MCF 10A (cell line): ENCODE measurements at regions of chr7 and their contacts with region 1.

Region 1: DNA sequence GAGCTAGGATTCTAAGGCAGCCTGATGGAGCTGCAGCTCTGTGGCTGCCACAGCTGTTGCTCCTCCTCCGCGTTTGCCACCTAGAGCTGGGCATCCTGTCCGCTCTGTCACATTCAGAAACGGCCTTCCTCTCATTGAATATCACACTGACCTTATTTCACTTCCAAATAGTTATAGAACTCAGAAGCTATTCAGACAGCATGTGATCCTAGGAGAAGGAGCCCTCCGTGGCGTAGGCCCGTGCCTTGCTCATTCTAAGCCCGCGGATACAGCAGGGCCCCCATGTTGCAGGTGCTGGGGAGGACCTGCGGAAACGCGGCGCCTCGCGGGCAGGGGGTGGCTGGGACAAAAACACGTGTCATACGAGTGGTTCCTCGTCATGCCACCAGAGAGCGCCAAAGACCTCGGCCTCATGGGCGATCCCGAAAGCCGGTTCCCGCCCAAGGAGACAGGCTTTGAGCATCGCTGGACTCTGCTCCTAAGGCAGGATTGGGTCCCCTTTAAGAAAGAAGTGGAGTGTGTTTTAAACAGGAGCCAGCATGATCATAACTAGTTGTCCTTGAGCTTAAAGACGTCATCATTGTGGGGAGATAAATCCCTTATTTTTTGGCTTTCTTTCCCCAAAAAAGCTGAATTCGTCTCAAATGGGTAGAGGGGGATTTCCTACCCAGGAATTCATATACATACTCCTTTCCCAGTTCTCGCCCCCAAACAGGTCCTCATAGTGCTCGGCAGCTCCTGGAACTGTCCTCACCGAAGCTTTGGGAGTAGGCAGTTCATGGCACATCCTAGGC is 17.9 kb upstream of the FIGNL1 start:
- DNase-seq: peak; percentile 80
- H3K4me3 Mint-ChIP-seq: no peak overlapping the region
- H3K27ac Mint-ChIP-seq: no peak overlapping the region
- H3K4me1 Mint-ChIP-seq: peaks cover 7% of the 10 kb centered on the region
- H3K27me3 Mint-ChIP-seq: no peaks in the 10 kb centered on the region
- CTCF ChIP-seq: peak; percentile 91

Region 2: GRCh38 chr7:50268223-50268622 is 199.8 kb before region 1 on chr7:
- CTCF ChIA-PET with region 1: no interaction called
- POLR2A ChIA-PET with region 1: no interaction called
- intact Hi-C with region 1: no loop called
- DNase-seq: no peak
- H3K4me3 Mint-ChIP-seq: no peak overlapping the region
- H3K27ac Mint-ChIP-seq: no peak overlapping the region
- H3K4me1 Mint-ChIP-seq: peaks cover 9% of the 10 kb centered on the region
- H3K27me3 Mint-ChIP-seq: peaks cover 50% of the 10 kb centered on the region
- CTCF ChIP-seq: no peak

Region 3: DNA sequence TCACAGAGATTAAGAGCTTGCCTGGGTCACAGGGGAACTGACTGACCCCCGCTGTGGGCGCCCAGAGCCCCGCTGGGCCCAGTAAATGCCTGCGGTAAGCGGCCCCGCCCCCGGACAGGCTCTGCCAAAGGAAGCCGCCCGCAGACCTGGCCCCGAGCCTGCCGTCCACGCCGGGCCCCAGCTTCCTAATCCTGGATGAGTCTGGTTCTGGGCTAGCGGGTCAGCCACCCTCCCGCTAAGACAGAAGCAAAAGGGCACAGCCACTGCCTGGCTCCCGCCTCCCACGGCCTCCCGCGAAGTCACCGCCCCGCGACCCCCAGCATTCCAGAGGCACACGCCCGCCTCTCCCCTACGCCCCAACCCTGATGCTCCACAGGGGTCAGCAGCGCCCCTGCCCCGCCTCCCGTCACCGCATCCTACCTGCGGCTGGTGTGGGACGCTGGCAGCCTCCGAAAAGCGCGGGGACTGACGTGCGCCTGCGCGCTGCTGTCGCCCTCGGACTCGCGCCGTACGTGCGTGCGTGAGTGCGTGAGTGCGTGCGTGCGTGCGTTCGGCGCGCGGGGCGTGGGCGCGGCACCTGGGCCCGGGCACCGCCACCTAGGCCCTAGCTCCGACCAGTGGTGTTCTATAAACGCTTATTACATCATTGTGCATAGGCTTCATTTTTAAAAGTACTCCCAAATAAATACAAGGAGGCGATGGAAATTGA is 18.0 kb before region 1 on chr7 and contains the start of gene FIGNL1:
- CTCF ChIA-PET with region 1: interaction called, 21 read pairs
- POLR2A ChIA-PET with region 1: no interaction called
- intact Hi-C with region 1: no loop called
- DNase-seq: peak; percentile 73
- H3K4me3 Mint-ChIP-seq: peak within 1 kb of the TSS; percentile 92
- H3K27ac Mint-ChIP-seq: peak within 1 kb of the TSS; percentile 59
- H3K4me1 Mint-ChIP-seq: peaks cover 22% of the 10 kb centered on the region
- H3K27me3 Mint-ChIP-seq: no peaks in the 10 kb centered on the region
- CTCF ChIP-seq: no peak
- total RNA-seq, gene FIGNL1: 10.7 and 14.5 TPM in 2 replicates

Region 4: GRCh38 chr7:50502001-50502684 is 34.1 kb after region 1 on chr7:
- CTCF ChIA-PET with region 1: interaction called, 27 read pairs
- POLR2A ChIA-PET with region 1: interaction called, 5 read pairs
- intact Hi-C with region 1: no loop called
- DNase-seq: peak; percentile 95
- H3K4me3 Mint-ChIP-seq: peak overlapping the region; percentile 58
- H3K27ac Mint-ChIP-seq: peak overlapping the region; percentile 82
- H3K4me1 Mint-ChIP-seq: peaks cover 71% of the 10 kb centered on the region
- H3K27me3 Mint-ChIP-seq: no peaks in the 10 kb centered on the region
- CTCF ChIP-seq: no peak

Region 5: GRCh38 chr7:50598460-50599343 is 130.7 kb after region 1 on chr7:
- CTCF ChIA-PET with region 1: interaction called, 17 read pairs
- POLR2A ChIA-PET with region 1: interaction called, 4 read pairs
- intact Hi-C with region 1: no loop called
- DNase-seq: no peak
- H3K4me3 Mint-ChIP-seq: no peak overlapping the region
- H3K27ac Mint-ChIP-seq: no peak overlapping the region
- H3K4me1 Mint-ChIP-seq: no peaks in the 10 kb centered on the region
- H3K27me3 Mint-ChIP-seq: no peaks in the 10 kb centered on the region
- CTCF ChIP-seq: no peak

Region 6: GRCh38 chr7:50653126-50653864 is 185.3 kb after region 1 on chr7:
- CTCF ChIA-PET with region 1: interaction called, 16 read pairs
- POLR2A ChIA-PET with region 1: no interaction called
- intact Hi-C with region 1: no loop called
- DNase-seq: peak; percentile 71
- H3K4me3 Mint-ChIP-seq: no peak overlapping the region
- H3K27ac Mint-ChIP-seq: no peak overlapping the region
- H3K4me1 Mint-ChIP-seq: peaks cover 22% of the 10 kb centered on the region
- H3K27me3 Mint-ChIP-seq: no peaks in the 10 kb centered on the region
- CTCF ChIP-seq: no peak

Region 7: GRCh38 chr7:51067757-51068156 is 599.7 kb after region 1 on chr7:
- CTCF ChIA-PET with region 1: interaction called, 42 read pairs
- POLR2A ChIA-PET with region 1: no interaction called
- intact Hi-C with region 1: loop called (anchors 1 kb)
- DNase-seq: peak; percentile 75
- H3K4me3 Mint-ChIP-seq: no peak overlapping the region
- H3K27ac Mint-ChIP-seq: no peak overlapping the region
- H3K4me1 Mint-ChIP-seq: peaks cover 11% of the 10 kb centered on the region
- H3K27me3 Mint-ChIP-seq: no peaks in the 10 kb centered on the region
- CTCF ChIP-seq: peak; percentile 52